ENCODE measurements at regions of chr18 and their contacts with region 1.

Region 1: DNA sequence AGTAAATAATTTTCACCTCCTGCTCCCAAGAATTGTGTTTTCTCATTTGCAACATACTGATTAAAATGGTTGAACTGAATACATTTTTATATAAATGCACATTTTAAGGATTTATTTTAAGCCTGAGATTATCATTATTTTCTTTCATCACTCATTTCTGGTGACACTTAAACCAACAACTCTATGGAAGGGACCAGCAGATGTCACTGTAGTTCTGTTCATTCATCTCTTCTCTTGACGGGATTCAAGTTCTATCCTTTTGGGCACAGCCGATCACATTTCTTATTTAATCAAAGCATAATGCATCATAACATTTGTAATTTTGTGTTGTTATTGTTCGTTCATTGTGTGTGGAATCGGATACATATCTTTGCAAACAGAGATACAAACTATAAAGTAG is 417.9 kb downstream of the HRH4 start:
- DNase-seq: no peak
- ATAC-seq: peak; percentile 82

Region 2: DNA sequence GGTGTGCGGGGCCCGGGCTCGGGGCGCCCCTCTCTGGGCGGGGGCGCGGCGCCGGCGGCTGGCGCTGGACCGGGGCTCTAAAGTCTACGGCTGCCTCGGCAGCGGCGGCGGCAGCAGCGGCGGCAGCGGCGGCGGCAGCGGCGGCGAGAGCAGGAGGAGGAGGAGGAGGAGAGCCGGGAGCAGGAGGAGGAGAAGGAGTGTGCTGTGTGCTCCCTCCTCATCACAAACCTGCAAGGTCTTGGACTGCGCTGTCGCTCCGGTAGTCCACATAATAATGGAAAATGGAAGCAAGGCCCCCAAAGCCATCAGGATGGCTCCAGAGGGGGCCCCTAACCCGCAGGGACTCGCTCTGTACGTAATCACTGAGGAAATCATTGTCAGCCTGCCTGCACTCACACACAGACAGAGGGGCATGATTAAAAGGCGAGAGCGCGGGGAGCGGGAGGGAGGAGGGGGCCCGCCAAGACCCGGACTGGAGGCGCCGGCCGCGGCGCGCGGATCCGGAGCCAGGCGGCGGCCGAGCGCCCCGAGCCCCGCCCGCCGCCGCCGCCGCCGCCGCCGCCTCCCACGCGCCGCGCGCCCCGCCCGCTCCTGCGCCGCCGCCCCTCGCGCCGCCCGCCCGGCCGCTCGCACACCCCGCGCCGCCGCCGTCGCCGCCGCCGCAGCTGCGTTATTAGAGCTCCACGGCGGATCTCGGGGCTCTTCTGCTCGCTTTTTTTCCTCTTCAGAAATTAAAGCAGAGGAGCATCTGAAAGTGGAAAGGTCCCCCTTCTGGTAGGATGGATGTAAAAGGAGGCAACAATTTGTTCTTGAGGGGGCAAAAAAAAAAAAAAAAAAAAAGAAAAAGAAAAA is 473.7 kb after region 1 on chr18 and contains the start of gene ZNF521:
- intact Hi-C with region 1: loop called (anchors 5 kb)
- DNase-seq: peak; percentile 90
- ATAC-seq: peak; percentile 80
- total RNA-seq, gene ZNF521: 24.5 TPM

Region 3: GRCh38 chr18:25669741-25670140 is 791.5 kb after region 1 on chr18:
- intact Hi-C with region 1: loop called (anchors 10 kb)
- DNase-seq: no peak
- ATAC-seq: no peak

Region 4: DNA sequence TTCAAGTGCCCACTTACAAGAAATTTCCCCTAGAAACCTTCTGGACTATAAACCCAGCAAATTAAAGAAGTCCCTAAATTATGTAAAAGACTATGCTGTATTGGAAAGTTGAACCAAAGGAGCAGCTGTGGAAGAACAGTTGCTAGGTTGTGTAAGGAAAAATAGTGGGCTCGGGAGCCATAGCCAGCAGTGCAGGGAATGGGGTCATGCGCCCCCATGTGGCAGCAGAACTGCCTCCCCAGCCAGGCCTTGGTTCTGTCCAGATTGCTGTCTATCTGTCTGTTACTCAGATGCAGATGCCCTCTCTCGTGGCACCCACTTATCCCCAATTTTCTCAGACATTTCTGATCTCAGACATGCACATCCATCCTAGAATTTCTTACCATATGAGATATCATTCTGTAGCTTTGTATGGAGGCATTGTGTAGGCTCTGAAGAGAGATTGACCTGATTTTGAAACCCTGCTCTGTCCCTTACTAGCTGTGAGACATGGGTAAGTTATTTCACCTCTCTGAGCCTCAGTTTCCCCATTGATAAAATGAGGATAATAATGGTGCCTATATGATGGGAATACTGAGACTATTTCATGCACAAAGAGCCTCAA is 953.8 kb after region 1 on chr18:
- intact Hi-C with region 1: loop called (anchors 5 kb)
- DNase-seq: peak; percentile 79
- ATAC-seq: peak; percentile 92

Region 5: GRCh38 chr18:25896178-25896780 is 1018.0 kb after region 1 on chr18:
- intact Hi-C with region 1: loop called (anchors 10 kb)
- DNase-seq: no peak
- ATAC-seq: peak; percentile 52